Activated T-helper 2 cell treated with anti-CD3 and anti-CD28 coated beads, Interferon-gamma antibody, Interleukin-2, Interleukin-4, amounts not matched to agents 10 μg/mL and 5 μg/mL and 100 μg/mL, durations not matched to agents 14 hours and 24 hours and 36 hours (primary cell): ENCODE measurements at regions of chr2 and their contacts with region 1.

Region 1: GRCh38 chr2:17753803-17754663 is at the starts of genes GEN1 and SMC6:
- DNase-seq: peak; percentile 89
- H3K4me3 Mint-ChIP-seq: peak within 1 kb of the TSS; percentile 91
- H3K27ac Mint-ChIP-seq: peak within 1 kb of the TSS; percentile 96
- H3K4me1 Mint-ChIP-seq: peaks cover 50% of the 10 kb centered on the region
- H3K27me3 Mint-ChIP-seq: no peaks in the 10 kb centered on the region
- total RNA-seq, gene GEN1: 26.6 and 29.2 TPM in 2 replicates
- total RNA-seq, gene SMC6: 30.1 and 30.3 TPM in 2 replicates

Region 2: GRCh38 chr2:16525265-16525887 is 1228.7 kb before region 1 on chr2:
- intact Hi-C with region 1: no loop called
- DNase-seq: no peak
- H3K4me3 Mint-ChIP-seq: no peak overlapping the region
- H3K27ac Mint-ChIP-seq: no peak overlapping the region
- H3K4me1 Mint-ChIP-seq: no peaks in the 10 kb centered on the region
- H3K27me3 Mint-ChIP-seq: peaks cover 6% of the 10 kb centered on the region

Region 3: GRCh38 chr2:17658251-17658843 is 95.7 kb before region 1 on chr2:
- intact Hi-C with region 1: loop called (anchors 5 kb)
- DNase-seq: no peak
- H3K4me3 Mint-ChIP-seq: no peak overlapping the region
- H3K27ac Mint-ChIP-seq: peak overlapping the region; percentile 7
- H3K4me1 Mint-ChIP-seq: peaks cover 16% of the 10 kb centered on the region
- H3K27me3 Mint-ChIP-seq: no peaks in the 10 kb centered on the region

Region 4: DNA sequence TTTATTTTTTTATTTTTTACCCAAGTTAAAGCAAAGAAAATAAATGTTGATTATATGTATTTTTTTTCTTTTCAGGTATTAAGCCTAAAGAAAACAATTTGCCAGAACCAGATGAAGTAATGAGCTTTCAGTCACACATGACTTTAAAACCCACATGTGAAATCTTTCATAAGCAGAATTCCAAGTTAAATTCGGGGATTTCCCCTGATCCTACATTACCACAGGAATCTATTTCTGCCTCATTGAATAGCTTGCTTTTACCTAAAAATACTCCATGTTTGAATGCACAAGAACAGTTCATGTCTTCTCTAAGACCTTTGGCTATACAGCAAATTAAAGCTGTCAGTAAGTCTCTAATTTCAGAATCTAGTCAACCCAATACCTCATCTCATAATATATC is 26.5 kb after region 1 on chr2:
- intact Hi-C with region 1: no loop called
- DNase-seq: no peak
- H3K4me3 Mint-ChIP-seq: no peak overlapping the region
- H3K27ac Mint-ChIP-seq: no peak overlapping the region
- H3K4me1 Mint-ChIP-seq: peaks cover 4% of the 10 kb centered on the region
- H3K27me3 Mint-ChIP-seq: no peaks in the 10 kb centered on the region

Region 5: GRCh38 chr2:17791121-17791816 is 37.2 kb after region 1 on chr2:
- intact Hi-C with region 1: loop called (anchors 5 kb)
- DNase-seq: no peak
- H3K4me3 Mint-ChIP-seq: no peak overlapping the region
- H3K27ac Mint-ChIP-seq: no peak overlapping the region
- H3K4me1 Mint-ChIP-seq: peaks cover 20% of the 10 kb centered on the region
- H3K27me3 Mint-ChIP-seq: peaks cover 39% of the 10 kb centered on the region

Region 6: DNA sequence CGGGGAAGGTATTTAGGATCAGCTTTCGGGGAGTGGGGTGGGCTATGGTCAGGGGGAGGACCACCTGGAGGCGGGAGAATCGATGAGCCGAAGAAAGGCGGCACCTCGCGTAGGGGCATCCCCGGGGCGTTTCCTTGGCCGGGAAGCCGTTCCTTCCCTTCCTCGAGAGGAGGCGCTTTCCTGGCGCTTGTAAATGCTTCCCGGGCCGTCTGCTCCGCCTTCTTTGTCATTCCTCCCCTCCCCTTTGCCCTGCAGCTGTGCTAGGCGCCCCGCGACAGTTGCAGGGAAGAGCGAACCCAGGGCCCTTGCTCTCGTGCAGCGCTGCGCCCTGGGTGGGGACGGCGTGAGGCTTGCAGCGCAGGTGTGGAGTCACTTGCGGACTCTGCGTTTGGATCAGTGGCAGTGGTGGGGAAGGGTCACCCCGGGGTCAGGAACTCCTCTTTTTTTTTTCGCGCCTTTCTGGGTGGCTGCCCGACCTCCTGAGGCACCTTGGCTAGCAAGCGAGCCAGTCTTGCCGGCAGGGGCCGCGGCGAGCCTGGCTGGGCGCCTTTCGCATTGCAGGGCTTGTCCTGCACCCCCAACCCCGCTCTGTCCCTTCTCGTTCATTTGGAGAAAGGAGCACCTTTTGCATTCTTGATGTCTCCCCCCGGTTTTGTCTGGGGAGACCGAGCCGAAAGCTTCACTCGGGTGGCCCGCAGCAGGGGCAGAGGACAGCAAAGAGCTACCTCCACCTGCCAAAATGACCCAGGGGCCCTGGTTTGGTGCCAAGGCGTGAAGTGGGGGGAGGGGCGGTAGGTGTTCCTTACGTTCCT is 125.3 kb after region 1 on chr2:
- intact Hi-C with region 1: loop called (anchors 2 kb)
- DNase-seq: no peak
- H3K4me3 Mint-ChIP-seq: peak overlapping the region; percentile 67
- H3K27ac Mint-ChIP-seq: no peak overlapping the region
- H3K4me1 Mint-ChIP-seq: peaks cover 3% of the 10 kb centered on the region
- H3K27me3 Mint-ChIP-seq: peaks cover 61% of the 10 kb centered on the region

Region 7: DNA sequence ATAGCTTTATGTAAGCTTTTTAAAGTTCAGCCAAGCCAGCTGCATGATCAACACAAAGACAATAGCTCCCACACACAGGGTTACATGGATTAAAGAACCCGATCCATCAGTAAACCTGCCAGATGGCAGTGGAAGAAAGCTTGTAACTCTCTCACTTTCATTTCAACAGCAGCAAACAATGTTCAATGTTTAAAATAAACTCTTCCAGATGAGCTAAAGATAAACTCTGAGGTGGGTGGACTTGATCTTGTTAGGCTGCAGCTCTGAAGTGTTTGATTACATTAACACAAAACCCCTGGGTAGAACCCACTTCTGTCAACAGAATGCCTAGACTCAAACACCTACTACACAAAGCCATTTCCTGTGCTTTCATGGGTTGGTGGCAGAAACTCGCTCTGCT is 792.5 kb after region 1 on chr2:
- intact Hi-C with region 1: loop called (anchors 10 kb)
- DNase-seq: no peak
- H3K4me3 Mint-ChIP-seq: no peak overlapping the region
- H3K27ac Mint-ChIP-seq: peak overlapping the region; percentile 76
- H3K4me1 Mint-ChIP-seq: peaks cover 33% of the 10 kb centered on the region
- H3K27me3 Mint-ChIP-seq: no peaks in the 10 kb centered on the region